ENCODE measurements at regions of chr9 and their contacts with region 1.

Region 1: DNA sequence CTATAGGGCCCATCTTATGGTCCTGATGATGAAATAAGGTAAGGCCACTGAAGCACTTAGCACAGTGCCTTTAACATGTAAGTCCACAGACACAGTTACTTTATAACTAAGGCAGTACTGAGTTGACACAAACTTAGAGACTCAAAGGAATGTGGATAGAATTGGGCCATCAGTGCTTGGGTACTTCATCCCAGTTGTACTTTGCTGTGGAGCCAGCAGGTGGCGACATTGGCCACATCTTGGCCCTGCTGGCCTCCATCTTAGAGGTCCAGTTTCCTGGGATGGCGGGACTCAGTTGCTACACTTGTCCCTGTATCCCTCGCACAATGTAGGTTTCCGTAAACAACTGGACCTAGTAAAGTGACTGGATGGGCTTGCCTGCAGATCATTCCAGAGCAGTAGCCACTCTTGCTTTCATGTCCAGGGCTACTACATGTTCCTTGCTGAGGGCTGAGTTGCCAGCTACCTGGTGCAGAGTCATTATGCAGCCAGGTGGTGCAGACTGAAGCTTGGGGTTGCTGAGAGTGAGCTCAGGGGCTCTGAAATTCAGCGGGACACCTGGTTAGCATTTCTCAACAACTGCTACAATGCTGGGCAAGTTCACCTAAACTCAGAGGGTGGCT is 10.6 kb downstream of the MTAP start:
- DNase-seq: no peak
- H3K4me3 ChIP-seq: no peak overlapping the region
- CTCF ChIP-seq: peak; percentile 85

Region 2: DNA sequence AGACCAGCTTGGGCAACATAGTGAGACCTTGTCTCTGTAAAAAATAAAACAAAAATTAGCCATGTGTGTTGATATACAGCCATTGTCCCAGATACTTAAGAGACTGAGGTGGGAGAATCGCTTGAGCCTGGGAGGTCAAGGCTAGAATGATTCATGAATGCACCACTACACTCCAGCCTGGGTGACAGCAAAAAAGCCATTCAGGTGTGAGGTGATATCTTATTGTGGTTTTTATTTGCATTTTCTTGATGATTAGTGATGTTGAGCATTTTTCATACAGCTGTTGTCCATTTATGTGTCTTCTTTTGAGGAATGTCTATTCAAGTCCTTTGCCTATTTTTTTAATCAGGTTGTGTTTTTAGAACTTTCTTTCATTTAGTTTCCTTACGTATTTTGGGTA is 12.6 kb after region 1 on chr9:
- CTCF ChIA-PET with region 1: interaction called, 13 read pairs
- POLR2A ChIA-PET with region 1: no interaction called
- DNase-seq: no peak
- H3K4me3 ChIP-seq: no peak overlapping the region
- CTCF ChIP-seq: no peak

Region 3: GRCh38 chr9:21995177-21996086 is 182.4 kb after region 1 on chr9:
- CTCF ChIA-PET with region 1: interaction called, 30 read pairs
- POLR2A ChIA-PET with region 1: no interaction called
- DNase-seq: no peak
- H3K4me3 ChIP-seq: peak overlapping the region; percentile 87
- CTCF ChIP-seq: peak; percentile 38

Region 4: DNA sequence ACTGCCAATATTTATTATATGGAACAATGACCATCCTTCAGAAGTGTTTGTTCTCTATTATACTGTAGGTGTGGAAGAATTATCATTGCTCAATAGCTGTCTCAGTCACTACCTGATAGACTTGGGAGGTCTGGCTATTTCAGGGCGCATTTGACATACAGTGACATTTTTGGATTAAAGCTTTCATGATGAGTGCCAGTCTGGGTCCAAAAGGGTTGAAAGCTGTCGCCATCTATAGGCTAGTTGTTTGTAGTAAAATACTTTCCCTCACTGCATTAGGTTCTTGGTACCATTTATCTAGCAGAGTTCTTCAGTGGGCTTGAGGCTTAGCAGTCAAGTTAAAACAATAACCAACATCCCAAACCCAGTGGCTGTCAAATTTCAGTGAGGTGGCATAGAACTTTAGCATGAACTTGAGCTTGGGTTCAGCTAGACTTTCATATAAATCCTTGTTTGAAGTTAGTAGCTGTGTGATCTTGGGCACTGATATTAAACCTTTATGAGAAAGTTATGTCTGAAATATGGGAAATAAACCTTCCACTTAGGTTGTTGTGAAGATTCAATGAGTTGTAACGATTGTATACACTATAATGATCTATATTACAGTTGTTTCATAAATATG is 306.6 kb after region 1 on chr9:
- CTCF ChIA-PET with region 1: interaction called, 70 read pairs
- POLR2A ChIA-PET with region 1: no interaction called
- DNase-seq: no peak
- H3K4me3 ChIP-seq: no peak overlapping the region
- CTCF ChIP-seq: peak; percentile 51

Region 5: DNA sequence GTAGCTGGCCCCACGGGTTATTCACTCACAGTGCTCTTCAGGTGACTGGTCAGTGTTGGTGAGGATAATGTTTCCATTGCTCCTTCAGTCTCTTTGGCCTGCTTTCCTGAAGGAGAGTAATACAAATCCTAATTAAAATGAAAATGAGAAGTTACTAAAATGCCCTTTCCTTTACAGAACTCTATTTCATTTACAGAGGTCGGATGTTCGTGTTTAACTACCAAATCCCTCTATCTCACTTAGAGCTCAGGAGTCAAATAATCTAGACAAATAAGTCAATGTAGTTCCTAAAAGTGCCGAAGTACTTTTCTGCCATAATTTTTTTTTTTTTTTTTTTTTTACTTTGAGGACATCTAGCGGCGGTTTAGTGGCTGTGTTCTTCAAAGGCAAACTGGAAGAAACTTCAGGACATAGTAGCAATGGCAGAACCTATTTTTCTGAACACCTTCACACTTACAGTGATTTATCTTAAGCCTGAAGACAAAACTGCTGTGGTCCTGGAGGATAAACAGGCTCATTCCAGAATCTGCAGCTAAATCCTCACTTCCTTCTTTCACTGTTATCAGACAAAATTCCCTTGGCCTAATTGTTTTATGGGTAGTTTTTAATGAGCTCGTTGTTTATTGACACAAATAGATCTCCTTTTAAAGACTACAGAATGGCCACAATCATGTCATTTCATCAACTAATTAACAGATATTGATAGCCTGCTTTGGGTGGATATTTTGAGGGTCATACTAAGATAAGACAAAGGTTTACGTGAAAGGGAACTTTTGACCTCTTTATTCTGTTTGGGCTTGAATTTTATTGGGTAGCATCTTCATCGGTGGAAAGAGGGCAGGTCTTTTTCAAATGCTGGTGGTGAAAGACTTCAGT is 426.0 kb after region 1 on chr9:
- CTCF ChIA-PET with region 1: interaction called, 197 read pairs
- POLR2A ChIA-PET with region 1: no interaction called
- DNase-seq: no peak
- H3K4me3 ChIP-seq: no peak overlapping the region
- CTCF ChIP-seq: peak; percentile 13

Measured in AG04449 (cell line).